HepG2 (cell line): ENCODE measurements at regions of chr20 and their contacts with region 1.

Region 1: GRCh38 chr20:56629670-56630478 is 768 bp downstream of the TFAP2C start:
- DNase-seq: no peak
- ATAC-seq: peak; percentile 36
- H3K4me3 ChIP-seq: no peak overlapping the region
- H3K27ac ChIP-seq: no peak overlapping the region
- H3K4me1 ChIP-seq: no peaks in the 10 kb centered on the region
- H3K27me3 ChIP-seq: peaks cover 11 to 95% of the 10 kb centered on the region in 2 experiments
- CTCF ChIP-seq: peak; percentile 44
- EP300 ChIP-seq: no peak
- POLR2A ChIP-seq: no peak
- RAD21 ChIP-seq: no peak

Region 2: GRCh38 chr20:54804609-54805008 is 1825.3 kb before region 1 on chr20:
- CTCF ChIA-PET with region 1: no interaction called
- POLR2A ChIA-PET with region 1: no interaction called
- in situ Hi-C with region 1: no loop called
- intact Hi-C with region 1: loop called (anchors 5 kb)
- DNase-seq: no peak
- ATAC-seq: no peak
- H3K4me3 ChIP-seq: no peak overlapping the region
- H3K27ac ChIP-seq: no peak overlapping the region
- H3K4me1 ChIP-seq: no peaks in the 10 kb centered on the region
- H3K27me3 ChIP-seq: no peaks in the 10 kb centered on the region
- CTCF ChIP-seq: no peak
- EP300 ChIP-seq: no peak
- POLR2A ChIP-seq: no peak
- RAD21 ChIP-seq: no peak